AG04449 (cell line): ENCODE measurements at regions of chr17 and their contacts with region 1.

Region 1: DNA sequence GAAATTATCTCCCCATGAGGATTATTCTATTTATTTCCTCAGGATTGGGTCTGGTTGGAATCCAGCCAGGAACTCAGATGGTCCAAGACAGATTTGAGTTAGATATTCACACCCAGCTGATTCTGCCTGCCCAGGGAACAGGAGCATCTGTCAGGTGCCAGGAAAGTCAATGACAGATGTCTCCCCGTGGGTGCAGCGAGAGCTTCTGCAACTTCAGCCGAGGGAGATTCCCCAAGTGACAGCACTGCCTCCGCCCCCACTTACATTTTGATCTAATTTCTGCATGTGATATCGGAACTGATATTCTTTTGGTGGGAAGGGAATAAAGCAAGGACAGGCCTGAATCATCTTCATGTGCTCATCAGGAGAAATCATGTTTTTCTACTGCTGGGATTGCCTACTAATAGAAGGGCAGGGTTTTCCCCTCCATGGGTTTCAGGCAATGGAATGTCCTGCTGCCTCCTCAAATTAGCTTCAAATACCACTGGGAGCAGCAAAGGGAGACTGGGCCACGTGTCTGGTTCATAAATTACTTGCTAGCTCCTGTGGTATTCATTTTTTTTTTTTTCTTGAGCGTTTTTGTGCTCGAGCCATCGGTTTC is 15.7 kb upstream of the DHX8 start:
- DNase-seq: peak; percentile 92
- H3K4me3 ChIP-seq: no peak overlapping the region
- CTCF ChIP-seq: no peak

Region 2: DNA sequence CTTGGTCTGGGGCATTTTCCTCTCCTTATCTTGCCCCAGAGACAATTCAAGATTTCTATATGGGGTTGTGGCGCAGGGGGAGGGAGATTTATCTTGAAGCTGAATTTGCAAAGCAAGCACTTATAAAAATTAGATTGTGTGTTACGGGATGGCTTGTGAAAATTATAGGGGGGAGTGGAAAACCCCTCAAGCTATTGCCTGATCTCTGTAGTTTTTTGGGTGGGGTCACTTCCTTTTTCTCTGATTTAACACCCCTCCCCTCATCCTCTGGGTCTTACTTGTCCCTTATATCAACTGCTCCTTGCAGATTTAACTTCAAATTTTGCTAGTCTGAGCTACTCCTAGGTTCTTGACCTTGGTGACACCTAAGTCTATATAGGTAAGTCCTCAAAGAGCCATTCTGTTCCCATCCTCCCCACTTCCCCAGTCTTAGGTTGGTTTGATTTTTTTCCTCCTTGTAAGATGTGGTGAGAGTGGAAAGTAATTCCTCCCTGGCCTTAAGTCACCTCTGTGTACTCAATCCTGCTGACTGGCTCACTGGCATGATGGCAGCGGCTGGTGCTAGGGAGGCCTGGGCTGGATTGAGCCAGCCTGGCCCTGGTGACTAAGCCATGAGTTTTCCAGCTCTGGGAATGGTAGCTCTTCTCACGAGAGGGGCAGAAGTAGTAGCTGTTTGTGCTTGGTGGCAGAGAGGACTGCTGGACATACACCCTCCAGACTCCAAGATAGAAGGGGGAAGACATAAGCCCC is 67.0 kb before region 1 on chr17:
- CTCF ChIA-PET with region 1: interaction called, 1,137 read pairs
- POLR2A ChIA-PET with region 1: interaction called, 50 read pairs
- DNase-seq: no peak
- H3K4me3 ChIP-seq: peak overlapping the region; percentile 85
- CTCF ChIP-seq: no peak

Region 3: DNA sequence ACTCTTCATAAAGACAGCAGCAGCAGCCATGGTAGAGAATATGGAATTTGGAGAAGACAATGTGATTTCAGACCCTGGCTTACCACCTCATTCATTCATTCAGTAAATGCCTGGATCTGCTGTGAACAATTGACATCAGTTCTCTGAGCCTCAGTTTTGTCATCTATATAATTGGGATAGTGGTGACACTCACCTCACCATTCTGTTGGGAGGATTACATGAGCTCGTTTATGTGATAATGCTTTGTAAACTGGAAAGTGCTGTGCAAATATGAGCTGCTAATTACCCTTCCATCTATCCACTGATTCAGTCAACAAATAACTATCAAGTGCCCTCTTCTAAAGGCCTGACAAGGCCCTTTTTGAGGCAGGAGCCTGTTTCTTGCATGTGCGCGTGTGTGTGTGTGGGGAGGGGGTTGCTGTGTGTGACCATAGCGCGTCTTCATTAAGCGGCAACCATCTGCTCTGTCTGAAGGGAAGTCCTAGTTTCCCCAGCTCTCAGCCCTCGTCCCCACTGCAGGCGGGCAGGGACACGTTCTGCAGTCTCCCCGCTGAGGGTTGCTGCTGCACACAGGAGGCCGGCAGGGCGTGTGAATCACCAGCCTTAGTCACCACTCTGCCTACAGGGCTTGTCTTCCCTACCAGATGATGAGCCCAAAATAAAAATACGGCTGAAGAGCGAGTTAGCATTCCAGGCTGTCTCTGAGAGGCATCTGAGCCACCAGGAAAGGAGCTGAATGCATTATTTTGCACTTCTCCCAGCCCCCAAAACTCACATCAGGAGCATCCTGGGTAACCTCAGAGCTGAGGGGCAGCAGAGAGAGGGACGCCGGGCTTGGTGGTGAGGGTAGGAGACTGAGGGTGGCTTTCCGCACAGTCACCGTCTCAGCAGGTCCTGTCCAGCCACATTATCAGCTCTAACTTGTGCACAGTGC is 49.4 kb before region 1 on chr17:
- CTCF ChIA-PET with region 1: interaction called, 3 read pairs
- POLR2A ChIA-PET with region 1: interaction called, 11 read pairs
- DNase-seq: peak; percentile 74
- H3K4me3 ChIP-seq: peak overlapping the region; percentile 20; the same call in 1 of the 2 replicates
- CTCF ChIP-seq: peak; percentile 19

Region 4: GRCh38 chr17:43661699-43662412 is 193.8 kb after region 1 on chr17 and contains the start of gene MEOX1:
- CTCF ChIA-PET with region 1: no interaction called
- POLR2A ChIA-PET with region 1: no interaction called
- DNase-seq: no peak
- H3K4me3 ChIP-seq: peak within 1 kb of the TSS; percentile 12; the same call in 1 of the 2 replicates
- CTCF ChIP-seq: no peak

Region 5: DNA sequence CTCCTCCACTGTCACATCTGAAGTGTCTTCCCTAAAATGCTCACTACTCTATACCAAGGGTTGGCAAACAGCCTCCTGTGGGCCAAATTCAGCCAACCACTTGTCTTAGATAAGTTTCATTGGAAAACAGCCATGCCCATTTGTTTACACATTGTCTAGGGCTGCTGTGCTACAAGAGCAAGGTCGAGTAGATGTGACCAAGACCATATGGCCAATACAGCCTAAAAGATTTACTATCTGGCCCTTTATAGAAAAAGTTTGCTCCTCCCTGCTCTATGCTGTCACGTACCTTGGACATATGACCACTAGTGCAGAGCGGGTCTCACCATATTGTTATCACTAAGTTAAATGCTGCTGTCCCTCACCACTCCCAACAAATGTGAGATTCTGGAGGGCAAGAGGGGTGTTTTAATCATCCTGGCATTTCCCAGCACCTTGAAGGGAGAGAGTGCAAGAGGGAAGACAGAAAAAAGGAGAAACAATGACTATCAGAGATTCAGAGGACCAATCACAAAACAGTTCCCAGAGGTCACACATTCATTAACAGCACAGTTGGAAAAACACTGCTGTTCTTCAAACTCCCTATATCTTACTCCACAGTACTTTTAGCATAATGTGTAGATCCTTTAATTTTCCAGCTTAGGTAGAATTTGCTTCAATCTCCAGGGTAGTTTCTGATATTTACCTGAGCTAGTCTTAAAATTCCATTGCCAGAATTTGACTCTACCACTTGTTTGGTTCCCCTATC is 585.2 kb after region 1 on chr17:
- CTCF ChIA-PET with region 1: no interaction called
- POLR2A ChIA-PET with region 1: no interaction called
- DNase-seq: no peak
- H3K4me3 ChIP-seq: no peak overlapping the region
- CTCF ChIP-seq: no peak